HepG2 (cell line): ENCODE measurements at regions of chr2 and their contacts with region 1.

Region 1: DNA sequence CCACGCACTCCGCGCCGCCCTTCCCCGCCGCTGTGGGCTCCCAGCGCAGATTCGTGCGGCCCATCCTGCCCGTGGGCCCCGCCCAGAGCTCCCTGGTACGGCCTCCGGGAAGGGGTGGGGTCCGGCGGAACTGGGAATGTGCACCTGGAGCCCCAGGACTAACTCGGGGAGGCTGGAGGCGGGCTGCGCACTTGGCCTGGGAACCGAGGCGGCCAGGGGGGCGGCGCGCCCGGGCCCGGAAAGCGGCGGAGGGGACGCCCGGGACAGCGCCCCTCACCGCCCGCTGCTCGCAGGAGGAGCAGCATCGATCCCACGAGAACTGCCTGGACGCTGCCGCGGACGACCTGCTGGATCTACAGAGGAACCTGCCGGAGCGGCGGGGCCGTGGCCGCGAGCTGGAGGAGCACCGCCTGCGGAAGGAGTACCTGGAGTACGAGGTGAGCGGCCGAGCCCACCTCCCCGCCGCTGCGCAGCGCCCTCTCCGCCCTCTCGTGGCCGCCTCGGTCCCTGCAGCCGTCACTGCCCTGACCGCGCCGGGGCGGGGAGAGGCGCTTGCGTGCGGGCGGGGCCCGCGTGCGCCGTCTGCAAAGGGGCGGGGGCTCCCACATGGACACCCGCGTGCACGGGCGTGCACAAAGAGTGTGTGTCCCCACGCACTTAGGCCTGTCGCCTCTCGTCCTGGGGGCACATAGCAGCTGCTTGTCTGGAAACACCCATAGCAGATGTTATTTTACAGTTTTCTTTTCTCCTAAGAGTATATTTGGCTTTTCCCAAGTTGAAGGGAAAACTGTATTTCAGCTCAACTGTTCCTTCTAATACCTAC is 25.2 kb downstream of the PSD4 start:
- DNase-seq: peak; percentile 73
- ATAC-seq: peak; percentile 86
- H3K4me3 ChIP-seq: peak overlapping the region; percentile 68 to 83 (median 80)
- H3K27ac ChIP-seq: peak overlapping the region; percentile 46
- H3K4me1 ChIP-seq: peaks cover 55% of the 10 kb centered on the region
- H3K27me3 ChIP-seq: no peaks in the 10 kb centered on the region; a peak in 1 of 5 replicates
- CTCF ChIP-seq: peak; percentile 96
- EP300 ChIP-seq: peak; percentile 38 to 58; a peak in 3 of 4 replicates
- POLR2A ChIP-seq: peak in 1 of 2 experiments; percentile 64; a peak in 2 of 4 replicates
- RAD21 ChIP-seq: peak; percentile 99

Region 2: DNA sequence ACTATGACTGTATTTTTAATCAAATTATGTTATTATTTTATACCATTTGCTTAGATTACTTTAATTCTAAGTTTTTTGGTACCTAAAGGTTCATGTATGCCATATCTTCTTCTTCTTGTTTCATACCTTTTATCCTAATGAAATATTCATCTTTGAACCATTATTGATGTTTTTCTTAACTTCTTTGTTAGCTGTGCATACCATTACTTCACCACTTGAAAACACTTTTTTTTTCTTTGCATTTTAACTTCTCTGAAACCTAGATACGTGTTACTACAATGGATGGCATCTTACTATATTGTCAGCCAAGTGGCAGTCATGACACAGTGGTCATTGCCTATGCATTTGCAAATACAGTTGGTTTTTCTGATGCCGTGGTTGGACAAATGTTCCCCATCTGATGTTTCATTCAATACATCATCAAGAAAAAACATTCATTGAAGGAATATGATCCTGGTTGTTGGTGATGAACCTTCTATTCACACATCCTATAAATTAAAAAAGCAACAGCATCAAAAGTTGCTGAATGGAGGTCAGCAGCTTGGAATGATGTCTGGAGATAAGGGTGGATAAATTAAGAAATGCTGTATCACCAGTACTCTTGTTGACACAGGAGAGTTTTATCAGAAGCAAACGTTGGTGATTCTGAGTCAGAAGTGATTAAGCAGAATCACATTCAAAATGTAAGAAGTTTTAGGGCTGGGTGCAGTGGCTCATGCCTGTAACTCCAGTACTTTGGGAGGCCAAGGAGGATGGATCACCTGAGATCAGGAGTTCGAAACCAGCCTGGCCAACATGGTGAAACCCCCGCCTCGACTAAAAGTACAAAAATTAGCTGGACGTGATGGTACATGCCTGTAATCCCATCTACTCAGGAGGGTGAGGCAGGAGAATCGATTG is 186.3 kb before region 1 on chr2:
- CTCF ChIA-PET with region 1: no interaction called
- POLR2A ChIA-PET with region 1: no interaction called
- in situ Hi-C with region 1: no loop called
- intact Hi-C with region 1: no loop called
- DNase-seq: no peak
- ATAC-seq: no peak
- H3K4me3 ChIP-seq: no peak overlapping the region
- H3K27ac ChIP-seq: no peak overlapping the region
- H3K4me1 ChIP-seq: no peaks in the 10 kb centered on the region
- H3K27me3 ChIP-seq: no peaks in the 10 kb centered on the region
- CTCF ChIP-seq: no peak
- EP300 ChIP-seq: no peak
- POLR2A ChIP-seq: no peak
- RAD21 ChIP-seq: no peak

Region 3: GRCh38 chr2:113080134-113080533 is 118.9 kb before region 1 on chr2:
- CTCF ChIA-PET with region 1: interaction called, 34 read pairs
- POLR2A ChIA-PET with region 1: interaction called, 9 read pairs
- in situ Hi-C with region 1: loop called (anchors 5 kb)
- intact Hi-C with region 1: loop called (anchors 1 kb)
- DNase-seq: peak; percentile 40
- ATAC-seq: peak; percentile 93
- H3K4me3 ChIP-seq: no peak overlapping the region
- H3K27ac ChIP-seq: no peak overlapping the region
- H3K4me1 ChIP-seq: peaks cover 14% of the 10 kb centered on the region; the same call in 1 of the 2 replicates
- H3K27me3 ChIP-seq: peaks cover 0 to 10% of the 10 kb centered on the region in 2 experiments; a peak in 2 of 5 replicates
- CTCF ChIP-seq: peak; percentile 98
- EP300 ChIP-seq: no peak
- POLR2A ChIP-seq: no peak
- RAD21 ChIP-seq: peak; percentile 91

Region 4: DNA sequence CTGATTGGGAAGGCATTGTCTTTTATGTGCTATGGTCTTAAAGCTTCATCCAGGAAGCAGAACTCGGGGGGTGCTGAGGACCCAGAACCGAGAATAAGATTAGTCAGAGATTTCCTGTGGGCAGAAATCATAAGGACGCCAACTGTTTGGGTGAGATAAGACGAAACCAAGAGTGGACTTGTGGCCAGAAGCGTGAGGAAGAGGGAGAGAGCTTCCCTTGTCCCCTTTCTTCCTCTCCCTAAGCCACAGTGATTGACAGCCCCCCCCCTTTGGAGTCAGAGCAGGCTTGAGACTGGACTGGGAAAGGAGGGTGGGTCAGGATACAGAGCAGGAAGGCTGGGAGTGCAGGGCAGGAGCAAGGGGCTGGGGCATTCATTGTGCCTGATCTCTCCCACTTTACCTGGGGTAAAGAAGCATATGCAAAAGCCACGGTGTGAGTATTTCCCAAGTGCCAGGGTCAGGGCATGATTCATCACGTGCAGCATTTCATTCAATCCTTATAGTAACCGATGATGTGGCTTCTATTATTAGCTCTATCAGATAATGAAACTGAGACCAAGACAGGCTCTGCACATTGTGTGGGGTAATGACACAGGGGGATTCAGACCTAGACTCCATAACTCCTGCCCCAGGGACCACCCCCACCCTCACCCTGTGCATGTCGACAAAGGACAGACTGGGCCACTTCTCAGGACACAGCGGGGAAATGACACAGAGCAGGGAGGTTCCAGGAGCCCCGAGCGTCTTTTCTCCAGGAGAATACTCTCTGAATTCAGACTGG is 74.6 kb before region 1 on chr2:
- CTCF ChIA-PET with region 1: no interaction called
- POLR2A ChIA-PET with region 1: interaction called, 13 read pairs
- in situ Hi-C with region 1: no loop called
- intact Hi-C with region 1: no loop called
- DNase-seq: peak; percentile 23
- ATAC-seq: no peak
- H3K4me3 ChIP-seq: no peak overlapping the region
- H3K27ac ChIP-seq: peak overlapping the region; percentile 92
- H3K4me1 ChIP-seq: peaks cover 80% of the 10 kb centered on the region
- H3K27me3 ChIP-seq: peaks cover 0 to 6% of the 10 kb centered on the region in 2 experiments; a peak in 2 of 5 replicates
- CTCF ChIP-seq: no peak
- EP300 ChIP-seq: no peak
- POLR2A ChIP-seq: no peak
- RAD21 ChIP-seq: no peak

Region 5: GRCh38 chr2:113157118-113157896 is 41.7 kb before region 1 on chr2:
- CTCF ChIA-PET with region 1: no interaction called
- POLR2A ChIA-PET with region 1: interaction called, 42 read pairs
- in situ Hi-C with region 1: no loop called
- intact Hi-C with region 1: loop called (anchors 2 kb)
- DNase-seq: no peak
- ATAC-seq: peak; percentile 81
- H3K4me3 ChIP-seq: peak overlapping the region; percentile 56 to 82 (median 69)
- H3K27ac ChIP-seq: peak overlapping the region; percentile 64
- H3K4me1 ChIP-seq: peaks cover 43% of the 10 kb centered on the region
- H3K27me3 ChIP-seq: no peaks in the 10 kb centered on the region; a peak in 1 of 5 replicates
- CTCF ChIP-seq: peak; percentile 12; the same call in 1 of the 2 replicates
- EP300 ChIP-seq: no peak
- POLR2A ChIP-seq: peak in 1 of 2 experiments; percentile 59; a peak in 1 of 4 replicates
- RAD21 ChIP-seq: no peak

Region 6: GRCh38 chr2:113173542-113174395 is 25.2 kb before region 1 on chr2 and contains the start of gene PSD4:
- CTCF ChIA-PET with region 1: no interaction called
- POLR2A ChIA-PET with region 1: interaction called, 66 read pairs
- in situ Hi-C with region 1: no loop called
- intact Hi-C with region 1: no loop called
- DNase-seq: no peak
- ATAC-seq: peak; percentile 74
- H3K4me3 ChIP-seq: peak within 1 kb of the TSS; percentile 32 to 59 (median 42)
- H3K27ac ChIP-seq: no peak within 1 kb of the TSS
- H3K4me1 ChIP-seq: peaks cover 69% of the 10 kb centered on the region
- H3K27me3 ChIP-seq: peaks cover 0 to 4% of the 10 kb centered on the region in 2 experiments; a peak in 2 of 5 replicates
- CTCF ChIP-seq: no peak
- EP300 ChIP-seq: no peak
- POLR2A ChIP-seq: peak; percentile 30 to 68; a peak in 3 of 4 replicates
- RAD21 ChIP-seq: no peak
- total RNA-seq, gene PSD4: 8.6 and 9.4 TPM in 2 replicates

Region 7: DNA sequence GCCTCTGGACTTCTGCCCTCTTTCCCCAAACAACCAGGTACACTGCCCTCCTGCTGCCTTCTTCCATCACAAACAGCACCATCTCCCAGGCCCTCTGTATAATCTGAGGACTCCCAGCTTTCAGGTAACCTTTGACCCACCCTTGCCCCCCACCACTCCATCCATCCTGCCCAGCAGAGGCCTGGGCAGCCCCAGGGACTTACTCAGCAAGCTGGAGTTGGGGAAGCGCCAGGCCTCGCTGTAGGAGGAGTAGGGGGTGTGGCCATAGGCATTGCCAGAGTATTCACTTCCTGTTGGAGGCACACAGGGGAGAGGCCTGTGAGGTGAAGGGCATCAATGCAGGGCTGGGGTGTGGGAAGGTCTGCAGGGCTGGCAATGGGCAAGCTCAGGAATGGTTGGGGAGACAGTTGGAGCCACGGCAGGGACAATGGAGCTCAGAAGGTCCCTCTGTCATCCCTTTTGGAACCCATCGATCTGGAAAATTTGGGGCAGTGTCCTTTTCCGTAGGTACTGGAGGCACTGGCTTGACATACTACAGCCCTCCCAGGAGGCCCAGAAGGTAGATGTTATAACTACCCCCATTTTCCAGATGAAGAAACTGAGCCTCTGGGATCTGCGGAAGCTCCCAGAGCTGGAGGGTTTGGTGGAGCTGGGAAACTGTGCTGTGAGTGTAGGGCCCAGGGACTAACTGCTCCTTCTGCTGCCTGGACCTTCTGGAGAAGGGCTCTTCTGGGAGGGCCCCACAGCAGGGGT is 21.1 kb after region 1 on chr2:
- CTCF ChIA-PET with region 1: no interaction called
- POLR2A ChIA-PET with region 1: interaction called, 18 read pairs
- in situ Hi-C with region 1: no loop called
- intact Hi-C with region 1: no loop called
- DNase-seq: peak; percentile 85
- ATAC-seq: peak; percentile 72
- H3K4me3 ChIP-seq: peak overlapping the region; percentile 52 to 70 (median 60)
- H3K27ac ChIP-seq: peak overlapping the region; percentile 97
- H3K4me1 ChIP-seq: peaks cover 80% of the 10 kb centered on the region
- H3K27me3 ChIP-seq: no peaks in the 10 kb centered on the region; a peak in 1 of 5 replicates
- CTCF ChIP-seq: 0 out of 2 replicates have a peak, but pooled peaks have one; percentile 3
- EP300 ChIP-seq: peak in 1 of 2 experiments; percentile 61; a peak in 1 of 4 replicates
- POLR2A ChIP-seq: peak; percentile 77 to 96
- RAD21 ChIP-seq: no peak; the same call in 1 of the 2 replicates